Ascending aorta (tissue), 2 donors: ENCODE measurements at regions of chr1 and their contacts with region 1.

Region 1: DNA sequence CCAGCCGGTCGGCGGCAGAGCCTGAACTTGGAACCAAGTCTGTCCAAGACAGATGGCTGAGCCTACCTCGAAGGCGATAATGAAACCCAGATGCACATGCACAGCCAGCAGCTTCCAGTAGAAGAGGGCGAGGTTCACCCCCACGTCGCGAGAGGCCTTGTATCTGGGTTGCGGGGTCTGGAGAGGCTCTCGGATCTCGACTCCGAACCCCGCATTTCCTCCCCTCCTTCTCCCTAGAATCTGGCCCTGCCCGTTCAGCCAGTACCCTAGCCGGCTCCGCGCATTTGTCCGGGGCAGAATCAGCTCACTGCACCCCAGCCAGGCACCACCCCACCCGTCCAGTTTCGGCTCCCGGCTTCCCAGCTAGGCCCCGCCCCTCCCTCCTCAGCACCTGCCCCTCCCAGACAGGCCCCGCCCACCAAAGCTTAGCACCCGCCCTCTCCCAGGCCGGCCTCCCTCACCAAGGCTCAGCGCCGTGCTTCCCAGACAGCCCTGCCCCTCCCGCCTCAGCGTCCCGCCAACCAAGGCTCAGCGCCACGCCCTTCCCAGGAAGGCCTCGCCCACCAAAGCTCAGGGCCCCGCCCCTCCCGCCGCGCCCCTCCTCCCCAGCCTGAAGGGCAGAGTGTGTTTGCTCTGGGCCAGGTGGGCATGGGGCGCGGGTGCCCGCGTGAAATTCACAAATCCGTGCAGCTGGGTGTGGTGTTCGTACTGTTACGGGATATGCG is 4.8 kb upstream of the ARHGEF19 start:
- DNase-seq: peak; percentile 93 to 98
- H3K4me3 ChIP-seq: peak overlapping the region; percentile 67 to 83
- H3K27ac ChIP-seq: peak overlapping the region; percentile 10 to 52
- H3K4me1 ChIP-seq: no peaks in the 10 kb centered on the region
- H3K27me3 ChIP-seq: no peaks in the 10 kb centered on the region
- CTCF ChIP-seq: no peak

Region 2: GRCh38 chr1:16206547-16207317 is 10.5 kb before region 1 on chr1:
- intact Hi-C with region 1: loop called (anchors 1 kb)
- DNase-seq: peak; percentile 88 to 97
- H3K4me3 ChIP-seq: peak overlapping the region; percentile 75 to 76
- H3K27ac ChIP-seq: peak overlapping the region; percentile 89 to 91
- H3K4me1 ChIP-seq: peaks cover 12 to 16% of the 10 kb centered on the region in 2 donors
- H3K27me3 ChIP-seq: no peaks in the 10 kb centered on the region
- CTCF ChIP-seq: no peak

Region 3: GRCh38 chr1:16236511-16237342 is 19.5 kb after region 1 on chr1 and contains the start of gene CPLANE2:
- intact Hi-C with region 1: loop called (anchors 2 kb)
- DNase-seq: peak; percentile 68 to 97
- H3K4me3 ChIP-seq: peak within 1 kb of the TSS; percentile 67 to 72
- H3K27ac ChIP-seq: peak within 1 kb of the TSS; percentile 74 to 84
- H3K4me1 ChIP-seq: peaks cover 0 to 19% of the 10 kb centered on the region in 2 donors
- H3K27me3 ChIP-seq: no peaks in the 10 kb centered on the region
- CTCF ChIP-seq: no peak
- total RNA-seq, gene CPLANE2: not detected

Region 4: GRCh38 chr1:16266411-16267118 is 49.3 kb after region 1 on chr1:
- intact Hi-C with region 1: no loop called
- DNase-seq: peak in 1 of 2 donors; percentile 51
- H3K4me3 ChIP-seq: no peak overlapping the region
- H3K27ac ChIP-seq: peak overlapping the region; percentile 18 to 53
- H3K4me1 ChIP-seq: peaks cover 0 to 53% of the 10 kb centered on the region in 2 donors
- H3K27me3 ChIP-seq: no peaks in the 10 kb centered on the region
- CTCF ChIP-seq: no peak